Right lobe of liver (tissue), 6 donors: ENCODE measurements at regions of chr10 and their contacts with region 1.

Region 1: GRCh38 chr10:73940634-73941221 is 29.8 kb downstream of the PLAU start:
- DNase-seq: peak; percentile 78 to 89 (median 86)
- ATAC-seq: peak; percentile 95 to 98 (median 98)
- H3K4me3 ChIP-seq: peak overlapping the region in 1 of 3 donors; percentile 10
- H3K27ac ChIP-seq: no peak overlapping the region
- H3K4me1 ChIP-seq: no peaks in the 10 kb centered on the region
- H3K27me3 ChIP-seq: no peaks in the 10 kb centered on the region
- CTCF ChIP-seq: peak; percentile 83 to 93 (median 87)
- POLR2A ChIP-seq: no peak

Region 2: DNA sequence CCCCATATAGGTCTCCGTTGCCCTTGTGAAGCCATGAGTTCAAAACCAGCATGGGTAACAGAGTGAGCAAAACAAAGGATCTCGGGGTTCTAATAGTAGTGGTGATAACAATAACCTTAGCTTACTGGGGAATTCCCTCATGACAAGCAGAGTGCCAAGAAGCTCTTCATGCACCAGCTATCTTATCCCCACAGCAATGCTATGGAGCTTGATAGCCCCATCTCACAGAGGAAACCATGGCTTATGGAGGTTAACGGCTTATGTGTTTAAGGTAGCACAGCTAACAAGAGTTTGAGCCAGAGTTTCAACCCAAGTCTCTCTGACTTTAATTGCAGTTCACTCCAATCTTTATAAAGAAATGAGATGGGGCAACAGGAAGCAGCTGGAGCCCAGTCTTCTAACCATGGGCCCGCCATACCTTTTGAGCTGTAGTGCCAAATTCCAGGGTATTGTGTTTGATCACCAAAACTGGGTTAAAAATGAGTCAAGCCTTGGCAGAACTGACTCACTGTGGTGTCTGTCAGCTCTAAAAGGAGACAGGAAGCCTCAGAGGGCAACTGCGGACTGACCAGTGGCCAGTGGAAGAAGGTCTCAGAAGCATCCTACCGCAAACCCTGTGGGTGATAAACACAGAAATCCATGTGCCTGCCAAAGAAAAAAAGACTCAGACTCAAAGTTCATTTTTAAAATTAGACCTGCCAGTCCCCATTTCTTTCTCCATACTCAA is 46.3 kb before region 1 on chr10:
- intact Hi-C with region 1: loop called (anchors 5 to 10 kb)
- DNase-seq: no peak
- ATAC-seq: no peak
- H3K4me3 ChIP-seq: no peak overlapping the region
- H3K27ac ChIP-seq: no peak overlapping the region
- H3K4me1 ChIP-seq: no peaks in the 10 kb centered on the region
- H3K27me3 ChIP-seq: no peaks in the 10 kb centered on the region
- CTCF ChIP-seq: no peak
- POLR2A ChIP-seq: no peak

Region 3: DNA sequence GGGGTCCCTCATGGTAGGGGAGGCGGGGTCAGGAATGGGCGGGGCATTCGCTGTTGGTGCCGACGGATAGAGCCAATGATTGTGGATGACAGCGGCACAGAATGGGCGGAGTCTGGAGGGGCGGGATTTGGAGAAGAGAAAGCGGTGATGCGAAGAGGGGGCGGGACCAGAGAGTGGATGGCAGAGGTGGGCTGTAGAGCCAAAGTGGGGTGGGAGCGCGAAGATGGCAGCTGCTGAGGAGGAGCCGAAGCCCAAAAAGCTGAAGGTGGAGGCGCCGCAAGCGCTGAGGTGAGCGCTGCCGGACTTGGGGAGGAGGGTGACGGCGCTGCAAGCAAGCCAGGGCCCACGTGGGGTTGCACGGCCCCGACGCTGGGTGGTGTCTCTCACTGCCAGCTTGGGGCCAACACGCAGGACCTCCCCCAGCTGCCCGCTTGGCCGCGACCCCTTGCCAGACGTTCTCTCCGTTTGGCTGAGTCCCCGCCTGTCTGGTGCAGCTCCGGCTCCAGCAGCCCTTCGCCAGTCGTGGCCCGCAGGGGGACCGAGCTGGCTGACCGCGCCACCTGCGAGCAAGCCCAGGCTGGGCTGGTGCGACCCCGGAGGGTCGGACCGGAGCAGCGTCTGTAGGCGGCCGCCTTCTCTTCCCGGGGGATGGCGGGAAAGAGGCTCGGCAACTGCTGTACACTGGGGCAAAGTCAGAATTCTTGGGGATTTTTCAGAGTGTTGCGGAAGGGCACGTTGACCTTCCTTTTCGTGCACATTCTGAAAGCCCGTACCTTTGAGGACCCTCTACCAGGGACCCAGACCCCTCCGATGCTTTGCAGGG is 210.5 kb after region 1 on chr10 and contains the start of gene ADK:
- intact Hi-C with region 1: no loop called
- DNase-seq: peak; percentile 99 to 100 (median 100)
- ATAC-seq: peak; percentile 95 to 97 (median 96)
- H3K4me3 ChIP-seq: peak within 1 kb of the TSS; percentile 83 to 89 (median 88)
- H3K27ac ChIP-seq: peak within 1 kb of the TSS; percentile 82 to 95 (median 86)
- H3K4me1 ChIP-seq: peaks cover 0 to 23% (median 3%) of the 10 kb centered on the region in 4 donors
- H3K27me3 ChIP-seq: no peaks in the 10 kb centered on the region
- CTCF ChIP-seq: peak in 3 of 4 donors; percentile 5 to 29 (median 19)
- POLR2A ChIP-seq: peak; percentile 65
- total RNA-seq, gene ADK: 54.2 to 92.5 (median 63.5) TPM